Caco-2 (cell line): ENCODE measurements at regions of chrX and their contacts with region 1.

Region 1: GRCh38 chrX:3651276-3651675 is 62.2 kb downstream of the PRKX start:
- DNase-seq: no peak
- H3K4me3 ChIP-seq: no peak overlapping the region
- H3K4me3 Mint-ChIP-seq: no peak overlapping the region
- H3K27ac Mint-ChIP-seq: no peak overlapping the region
- H3K4me1 ChIP-seq: no peaks in the 10 kb centered on the region
- H3K4me1 Mint-ChIP-seq: no peaks in the 10 kb centered on the region
- H3K27me3 ChIP-seq: no peaks in the 10 kb centered on the region
- H3K27me3 Mint-ChIP-seq: no peaks in the 10 kb centered on the region
- CTCF ChIP-seq: peak in 1 of 2 experiments; percentile 40

Region 2: GRCh38 chrX:3713225-3713936 is 62.1 kb after region 1 on chrX and contains the start of gene PRKX:
- CTCF ChIA-PET with region 1: no interaction called
- POLR2A ChIA-PET with region 1: no interaction called
- intact Hi-C with region 1: loop called (anchors 2 kb)
- DNase-seq: peak; percentile 40 to 70
- H3K4me3 ChIP-seq: peak within 1 kb of the TSS; percentile 70
- H3K4me3 Mint-ChIP-seq: peak within 1 kb of the TSS; percentile 83
- H3K27ac Mint-ChIP-seq: peak within 1 kb of the TSS; percentile 77
- H3K4me1 ChIP-seq: no peaks in the 10 kb centered on the region
- H3K4me1 Mint-ChIP-seq: no peaks in the 10 kb centered on the region
- H3K27me3 ChIP-seq: no peaks in the 10 kb centered on the region
- H3K27me3 Mint-ChIP-seq: no peaks in the 10 kb centered on the region
- CTCF ChIP-seq: no peak
- total RNA-seq, gene PRKX: 20.3 and 23.3 TPM in 2 replicates

Region 3: GRCh38 chrX:3811331-3812311 is 160.3 kb after region 1 on chrX:
- CTCF ChIA-PET with region 1: no interaction called
- POLR2A ChIA-PET with region 1: no interaction called
- intact Hi-C with region 1: loop called (anchors 1 kb)
- DNase-seq: peak in 1 of 2 experiments; percentile 21
- H3K4me3 ChIP-seq: no peak overlapping the region
- H3K4me3 Mint-ChIP-seq: no peak overlapping the region
- H3K27ac Mint-ChIP-seq: no peak overlapping the region
- H3K4me1 ChIP-seq: no peaks in the 10 kb centered on the region
- H3K4me1 Mint-ChIP-seq: no peaks in the 10 kb centered on the region
- H3K27me3 ChIP-seq: no peaks in the 10 kb centered on the region
- H3K27me3 Mint-ChIP-seq: peaks cover 7% of the 10 kb centered on the region
- CTCF ChIP-seq: peak in 1 of 2 experiments; percentile 48

Region 4: GRCh38 chrX:3968749-3969148 is 317.5 kb after region 1 on chrX:
- CTCF ChIA-PET with region 1: no interaction called
- POLR2A ChIA-PET with region 1: no interaction called
- intact Hi-C with region 1: no loop called
- DNase-seq: no peak
- H3K4me3 ChIP-seq: no peak overlapping the region
- H3K4me3 Mint-ChIP-seq: no peak overlapping the region
- H3K27ac Mint-ChIP-seq: no peak overlapping the region
- H3K4me1 ChIP-seq: no peaks in the 10 kb centered on the region
- H3K4me1 Mint-ChIP-seq: no peaks in the 10 kb centered on the region
- H3K27me3 ChIP-seq: no peaks in the 10 kb centered on the region
- H3K27me3 Mint-ChIP-seq: no peaks in the 10 kb centered on the region
- CTCF ChIP-seq: no peak

Region 5: GRCh38 chrX:4314586-4314985 is 663.3 kb after region 1 on chrX:
- CTCF ChIA-PET with region 1: no interaction called
- POLR2A ChIA-PET with region 1: no interaction called
- intact Hi-C with region 1: no loop called
- DNase-seq: no peak
- H3K4me3 ChIP-seq: no peak overlapping the region
- H3K4me3 Mint-ChIP-seq: no peak overlapping the region
- H3K27ac Mint-ChIP-seq: peak overlapping the region; percentile 84
- H3K4me1 ChIP-seq: peaks cover 14% of the 10 kb centered on the region; the same call in 1 of the 2 replicates
- H3K4me1 Mint-ChIP-seq: peaks cover 19% of the 10 kb centered on the region
- H3K27me3 ChIP-seq: no peaks in the 10 kb centered on the region
- H3K27me3 Mint-ChIP-seq: no peaks in the 10 kb centered on the region
- CTCF ChIP-seq: no peak